ENCODE measurements at regions of chr1 and their contacts with region 1.

Region 1: DNA sequence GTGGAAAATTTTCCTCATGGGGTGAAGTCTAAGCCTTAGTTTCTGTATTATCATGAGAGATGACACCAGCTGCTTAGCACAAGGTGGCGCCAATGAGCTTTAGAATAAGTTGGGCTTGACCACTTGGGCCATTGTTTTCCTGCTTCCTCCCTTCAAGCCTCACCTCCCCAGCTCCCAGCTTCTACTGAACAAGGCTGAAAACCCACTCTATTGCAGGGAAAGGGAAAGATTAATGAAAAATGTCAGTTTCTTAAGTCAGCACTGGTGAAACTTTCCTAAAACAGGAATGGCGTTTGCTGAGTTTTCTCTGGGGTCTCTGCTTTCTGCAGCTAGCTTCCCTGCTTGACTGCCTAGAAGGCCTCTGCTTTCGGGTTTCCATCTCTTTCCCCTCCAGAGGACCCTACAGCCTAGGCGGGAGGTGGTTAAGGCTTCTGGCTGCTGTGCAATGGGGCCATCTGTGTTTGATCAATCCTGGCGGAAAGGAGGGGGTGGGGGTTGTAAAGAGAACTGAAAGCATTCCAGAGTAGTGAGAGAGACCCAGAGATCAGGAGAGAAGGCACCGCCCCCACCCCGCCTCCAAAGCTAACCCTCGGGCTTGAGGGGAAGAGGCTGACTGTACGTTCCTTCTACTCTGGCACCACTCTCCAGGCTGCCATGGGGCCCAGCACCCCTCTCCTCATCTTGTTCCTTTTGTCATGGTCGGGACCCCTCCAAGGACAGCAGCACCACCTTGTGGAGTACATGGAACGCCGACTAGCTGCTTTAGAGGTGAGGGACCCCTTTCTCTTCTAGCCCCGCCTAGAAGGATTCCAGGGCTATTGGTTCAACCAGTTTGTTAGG is at the start of gene OLFML3:
- DNase-seq: peak; percentile 84 to 85
- H3K4me3 ChIP-seq: peak within 1 kb of the TSS; percentile 8 to 48 (median 20); a peak in 5 of 8 replicates
- H3K27ac ChIP-seq: peak within 1 kb of the TSS; percentile 86
- H3K4me1 ChIP-seq: peaks cover 14 to 51% (median 27%) of the 10 kb centered on the region in 4 experiments
- H3K27me3 ChIP-seq: no peaks in the 10 kb centered on the region; a peak in 1 of 7 replicates
- CTCF ChIP-seq: peak; percentile 74 to 82 (median 81)
- EP300 ChIP-seq: no peak
- POLR2A ChIP-seq: peak in 1 of 2 experiments; percentile 50; a peak in 1 of 3 replicates
- RAD21 ChIP-seq: peak; percentile 89 to 92
- total RNA-seq, gene OLFML3: 55.3 and 56.0 TPM in 2 replicates

Region 2: DNA sequence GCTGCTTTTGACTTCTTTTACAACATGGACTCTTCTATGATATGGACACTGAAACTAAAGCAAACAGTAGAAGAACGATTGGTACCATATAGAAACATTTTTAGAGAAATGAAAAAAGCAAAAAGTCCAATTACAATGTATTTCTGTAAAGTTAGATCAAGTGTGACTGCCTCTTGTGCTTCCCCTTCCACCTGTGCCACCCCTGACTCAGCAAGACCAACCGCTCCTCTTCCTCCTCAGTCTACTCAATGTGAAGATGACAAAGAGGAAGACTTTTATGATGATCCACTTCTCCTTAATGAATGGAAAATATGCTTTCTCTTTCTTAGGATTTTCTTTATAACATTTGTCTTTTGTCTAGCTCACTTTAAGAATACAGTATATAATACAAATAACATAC is 286.7 kb before region 1 on chr1:
- CTCF ChIA-PET with region 1: no interaction called
- POLR2A ChIA-PET with region 1: no interaction called
- DNase-seq: no peak
- H3K4me3 ChIP-seq: no peak overlapping the region
- H3K27ac ChIP-seq: no peak overlapping the region
- H3K4me1 ChIP-seq: no peaks in the 10 kb centered on the region
- H3K27me3 ChIP-seq: no peaks in the 10 kb centered on the region
- CTCF ChIP-seq: no peak
- EP300 ChIP-seq: no peak
- POLR2A ChIP-seq: no peak
- RAD21 ChIP-seq: no peak

Region 3: GRCh38 chr1:113993072-113993471 is 14.0 kb after region 1 on chr1:
- CTCF ChIA-PET with region 1: interaction called, 10 read pairs
- POLR2A ChIA-PET with region 1: interaction called, 4 read pairs
- DNase-seq: no peak
- H3K4me3 ChIP-seq: no peak overlapping the region
- H3K27ac ChIP-seq: no peak overlapping the region
- H3K4me1 ChIP-seq: no peaks in the 10 kb centered on the region; a peak in 1 of 7 replicates
- H3K27me3 ChIP-seq: peaks cover 0 to 3% (median 0%) of the 10 kb centered on the region in 4 experiments; a peak in 1 of 7 replicates
- CTCF ChIP-seq: no peak
- EP300 ChIP-seq: no peak
- POLR2A ChIP-seq: no peak
- RAD21 ChIP-seq: no peak

Region 4: GRCh38 chr1:114033216-114033706 is 54.2 kb after region 1 on chr1:
- CTCF ChIA-PET with region 1: interaction called, 29 read pairs
- POLR2A ChIA-PET with region 1: interaction called, 5 read pairs
- DNase-seq: peak in 1 of 2 experiments; percentile 63
- H3K4me3 ChIP-seq: peak overlapping the region; percentile 37 to 59 (median 51)
- H3K27ac ChIP-seq: peak overlapping the region; percentile 66
- H3K4me1 ChIP-seq: peaks cover 3 to 36% (median 25%) of the 10 kb centered on the region in 4 experiments
- H3K27me3 ChIP-seq: no peaks in the 10 kb centered on the region
- CTCF ChIP-seq: peak; percentile 33 to 82 (median 69)
- EP300 ChIP-seq: 0 out of 3 replicates have a peak, but pooled peaks of 1 of the 2 experiments have one; percentile 16
- POLR2A ChIP-seq: no peak; a peak in 1 of 3 replicates
- RAD21 ChIP-seq: peak; percentile 63 to 66

Region 5: DNA sequence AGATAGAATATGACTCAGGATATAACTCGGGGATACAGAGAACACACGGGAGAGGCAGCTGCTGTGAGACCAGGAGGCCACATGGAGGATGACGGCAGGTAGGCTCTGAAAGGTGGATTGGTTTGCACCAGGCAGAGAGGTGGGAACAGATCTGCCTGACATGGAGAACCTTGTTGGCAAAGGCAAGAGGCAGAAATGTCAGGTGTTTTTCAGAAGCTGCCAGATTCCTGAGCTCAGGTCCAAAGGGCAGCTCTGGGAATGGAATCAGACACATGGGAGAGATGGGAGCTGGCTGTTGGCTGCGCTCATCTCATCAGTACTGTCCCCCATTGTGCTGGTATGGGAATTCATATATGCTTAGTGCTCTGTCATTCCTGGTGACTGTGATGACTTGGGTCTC is 155.4 kb after region 1 on chr1:
- CTCF ChIA-PET with region 1: interaction called, 11 read pairs
- POLR2A ChIA-PET with region 1: no interaction called
- DNase-seq: no peak
- H3K4me3 ChIP-seq: no peak overlapping the region
- H3K27ac ChIP-seq: no peak overlapping the region
- H3K4me1 ChIP-seq: peaks cover 0 to 8% (median 4%) of the 10 kb centered on the region in 4 experiments; a peak in 2 of 7 replicates
- H3K27me3 ChIP-seq: no peaks in the 10 kb centered on the region
- CTCF ChIP-seq: no peak
- EP300 ChIP-seq: no peak
- POLR2A ChIP-seq: no peak
- RAD21 ChIP-seq: no peak

Region 6: DNA sequence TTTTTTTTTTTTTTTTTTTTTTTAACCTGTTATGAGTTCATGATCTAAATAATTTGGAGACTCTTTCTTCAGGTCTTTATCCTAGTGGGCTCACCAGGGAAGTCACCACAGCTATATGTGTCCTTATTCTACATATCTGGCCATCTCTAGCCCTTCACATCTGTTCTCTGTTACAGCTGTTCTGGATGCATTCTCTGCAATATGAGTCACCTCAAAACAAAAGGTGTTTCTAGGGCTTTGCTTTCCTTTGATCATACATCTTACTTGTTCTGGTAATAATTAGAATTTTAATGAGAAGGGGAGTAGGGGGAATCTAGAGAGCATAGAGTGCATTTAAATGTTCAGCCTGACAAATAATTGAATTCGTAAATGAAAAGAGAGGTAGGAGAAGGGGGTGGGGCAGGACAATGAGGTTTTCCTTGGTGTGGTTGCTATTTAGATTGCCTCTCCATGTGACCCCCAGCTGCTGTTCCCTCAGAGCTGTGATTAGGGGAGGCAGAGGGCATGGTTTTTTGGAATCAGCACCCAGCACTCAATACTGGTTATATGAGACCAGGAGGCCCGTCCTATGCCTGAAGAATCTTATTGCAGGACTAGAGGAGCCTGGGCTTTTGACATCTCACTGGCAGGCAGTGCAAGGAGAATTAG is 166.5 kb after region 1 on chr1:
- CTCF ChIA-PET with region 1: interaction called, 11 read pairs
- POLR2A ChIA-PET with region 1: no interaction called
- DNase-seq: no peak
- H3K4me3 ChIP-seq: peak overlapping the region in 1 of 4 experiments; percentile 5; a peak in 1 of 8 replicates
- H3K27ac ChIP-seq: peak overlapping the region; percentile 3; the same call in 1 of the 2 replicates
- H3K4me1 ChIP-seq: peaks cover 8 to 27% (median 25%) of the 10 kb centered on the region in 4 experiments
- H3K27me3 ChIP-seq: no peaks in the 10 kb centered on the region
- CTCF ChIP-seq: no peak
- EP300 ChIP-seq: no peak
- POLR2A ChIP-seq: no peak
- RAD21 ChIP-seq: no peak

Region 7: GRCh38 chr1:114282751-114283403 is 303.8 kb after region 1 on chr1:
- CTCF ChIA-PET with region 1: interaction called, 24 read pairs
- POLR2A ChIA-PET with region 1: interaction called, 7 read pairs
- DNase-seq: peak; percentile 70 to 93
- H3K4me3 ChIP-seq: no peak overlapping the region
- H3K27ac ChIP-seq: no peak overlapping the region
- H3K4me1 ChIP-seq: peaks cover 0 to 9% (median 2%) of the 10 kb centered on the region in 4 experiments; a peak in 3 of 7 replicates
- H3K27me3 ChIP-seq: no peaks in the 10 kb centered on the region
- CTCF ChIP-seq: peak; percentile 86 to 95 (median 93)
- EP300 ChIP-seq: no peak
- POLR2A ChIP-seq: no peak
- RAD21 ChIP-seq: peak; percentile 90 to 95

Measured in H1 (cell line).